ENCODE measurements at regions of chr6 and their contacts with region 1.

Region 1: DNA sequence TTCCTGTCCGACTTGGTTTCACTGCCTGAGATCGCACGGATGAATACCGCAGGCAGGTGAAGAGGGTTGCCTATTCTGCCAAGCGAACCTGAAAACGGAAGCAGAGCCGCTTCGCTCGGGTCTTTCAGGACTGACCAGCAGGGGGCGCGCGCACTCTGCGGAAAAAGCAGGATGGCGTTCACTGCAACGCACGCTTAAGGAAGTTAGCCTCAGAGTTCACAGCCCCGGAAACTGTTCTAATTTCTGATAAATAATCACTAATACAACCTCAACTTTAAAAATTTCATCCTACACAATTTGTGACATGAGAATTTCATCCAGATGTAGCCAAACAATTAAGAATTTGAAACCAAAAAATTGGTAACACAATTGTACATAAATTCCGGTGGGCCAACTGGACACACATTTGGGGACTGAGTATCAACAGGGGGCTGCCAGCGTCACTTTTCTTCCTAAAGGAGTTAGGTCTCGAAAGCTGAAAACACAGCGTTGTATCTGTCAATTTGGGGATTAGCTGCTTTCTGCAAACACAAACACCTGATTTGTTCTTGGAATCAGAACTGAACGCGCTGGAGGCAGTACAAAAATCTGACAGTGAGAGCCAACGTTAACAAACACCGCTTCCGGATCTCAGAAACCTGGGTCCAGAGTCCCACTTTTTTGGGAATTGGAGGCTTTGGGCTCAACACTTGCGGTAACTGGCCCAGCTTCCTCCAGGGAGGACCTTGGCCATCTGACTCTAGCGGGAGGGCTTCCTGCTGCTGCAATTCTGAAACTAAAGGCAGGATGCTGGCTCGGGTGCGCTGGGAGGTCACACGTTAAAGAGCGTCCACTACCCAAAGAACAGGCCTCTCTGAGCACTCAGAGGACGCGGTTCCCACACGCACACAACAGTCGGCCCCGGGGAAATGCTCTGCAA is 8.8 kb downstream of the PXDC1 start:
- DNase-seq: peak; percentile 97
- H3K4me3 ChIP-seq: peak overlapping the region in 4 of 8 donors; percentile 3 to 48 (median 8)
- H3K27ac ChIP-seq: peak overlapping the region; percentile 52 to 84 (median 75)
- H3K4me1 ChIP-seq: peaks cover 22 to 74% (median 60%) of the 10 kb centered on the region in 6 donors
- H3K27me3 ChIP-seq: no peaks in the 10 kb centered on the region
- CTCF ChIP-seq: peak; percentile 81 to 97 (median 96)
- POLR2A ChIP-seq: no peak

Region 2: DNA sequence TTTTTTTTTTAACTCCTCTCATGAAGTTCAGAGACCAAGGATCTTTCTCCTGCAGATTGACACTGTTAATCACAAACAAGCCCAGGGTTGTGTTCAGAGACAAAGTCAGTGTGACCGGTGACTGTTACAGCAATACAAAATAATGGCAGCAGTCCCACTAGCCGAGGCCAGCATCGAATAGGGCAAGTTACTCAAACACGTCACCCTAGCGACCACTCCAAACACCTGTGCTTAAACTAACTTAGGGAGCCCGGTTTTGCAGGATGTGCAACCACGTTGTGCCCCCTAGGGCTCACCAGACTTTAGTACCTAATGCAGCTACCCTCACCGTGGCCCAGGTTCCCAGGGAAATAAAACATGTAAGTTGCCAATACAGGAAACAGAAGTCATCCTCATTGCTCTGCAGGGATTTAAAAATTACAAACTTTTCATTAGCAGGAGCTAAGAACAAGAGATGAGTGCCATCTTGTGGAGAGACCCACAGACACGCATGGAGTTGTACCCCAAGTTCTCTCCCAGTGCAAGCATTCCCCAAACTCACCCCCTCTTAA is 144.5 kb after region 1 on chr6:
- intact Hi-C with region 1: loop called (anchors 10 kb)
- DNase-seq: no peak
- H3K4me3 ChIP-seq: no peak overlapping the region
- H3K27ac ChIP-seq: no peak overlapping the region
- H3K4me1 ChIP-seq: no peaks in the 10 kb centered on the region
- H3K27me3 ChIP-seq: no peaks in the 10 kb centered on the region
- CTCF ChIP-seq: peak in 8 of 11 experiments; percentile 29 to 64 (median 48)
- POLR2A ChIP-seq: no peak

Region 3: DNA sequence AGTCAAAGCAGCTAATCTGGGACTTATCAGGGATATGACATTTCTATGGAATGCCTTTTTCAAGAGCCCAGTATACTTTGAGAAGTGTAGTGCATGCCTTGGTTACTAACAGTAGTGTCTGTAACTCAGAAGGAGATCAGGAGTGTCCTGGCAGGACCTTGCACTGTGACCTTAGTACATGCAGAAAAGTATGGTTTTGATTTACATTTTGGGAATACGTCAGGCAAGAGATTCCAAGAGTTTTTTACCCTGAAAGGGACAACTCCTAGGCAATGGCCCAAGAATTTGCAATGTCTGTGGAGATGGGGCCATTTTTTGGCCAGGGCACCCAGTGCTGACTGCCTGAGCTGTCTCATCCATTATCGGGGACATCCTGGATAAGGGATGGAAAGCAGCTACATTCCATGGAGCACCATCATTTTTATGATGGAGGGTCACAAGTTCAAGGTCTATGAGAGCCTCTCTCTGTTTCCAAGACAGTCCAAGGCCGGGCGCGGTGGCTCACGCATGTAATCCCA is 186.7 kb after region 1 on chr6:
- intact Hi-C with region 1: loop called (anchors 5 kb)
- DNase-seq: no peak
- H3K4me3 ChIP-seq: no peak overlapping the region
- H3K27ac ChIP-seq: no peak overlapping the region
- H3K4me1 ChIP-seq: no peaks in the 10 kb centered on the region
- H3K27me3 ChIP-seq: peaks cover 0 to 3% (median 0%) of the 10 kb centered on the region in 7 donors
- CTCF ChIP-seq: no peak
- POLR2A ChIP-seq: no peak

Region 4: DNA sequence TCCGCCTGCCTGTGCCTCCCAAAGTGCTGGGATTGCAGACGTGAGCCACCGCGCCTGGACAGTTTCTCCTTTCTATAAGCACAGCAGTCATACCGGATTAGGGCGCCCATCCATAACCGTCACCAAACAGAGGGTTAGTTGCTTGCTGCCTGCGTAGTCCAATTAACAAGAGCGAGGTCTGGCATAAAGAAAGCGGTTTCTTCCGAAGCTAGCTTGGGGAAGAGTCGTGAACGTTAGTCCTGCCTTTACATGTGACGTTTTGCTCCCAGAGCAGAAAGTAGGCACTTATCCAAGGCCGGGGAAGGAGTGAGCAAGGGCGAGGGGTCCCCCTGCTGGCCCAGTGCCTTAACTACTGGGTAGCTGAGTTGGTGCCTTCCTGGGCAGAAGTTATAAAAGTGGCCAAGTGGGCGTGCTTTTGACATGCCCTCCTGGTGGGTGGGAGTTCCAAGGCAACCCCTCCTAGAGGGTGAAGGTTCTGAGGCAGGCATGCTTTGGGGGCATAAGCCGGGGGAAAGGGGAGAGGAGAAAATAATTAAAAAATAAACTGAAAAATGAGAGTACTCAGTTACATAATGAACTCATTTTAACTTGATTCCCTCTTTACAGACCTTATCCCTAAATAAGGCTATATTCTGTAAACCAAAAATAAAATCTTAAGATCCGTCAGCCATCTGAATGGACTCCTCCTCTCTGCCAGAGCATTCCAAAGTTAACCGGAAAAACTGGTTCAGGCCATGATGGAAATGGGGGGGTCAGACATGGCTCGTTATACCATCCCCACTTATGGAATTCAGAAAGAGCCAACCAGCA is 248.2 kb after region 1 on chr6:
- intact Hi-C with region 1: loop called (anchors 5 kb)
- DNase-seq: peak; percentile 90
- H3K4me3 ChIP-seq: peak overlapping the region in 6 of 8 donors; percentile 4 to 59 (median 22)
- H3K27ac ChIP-seq: peak overlapping the region in 6 of 8 donors; percentile 51 to 76 (median 66)
- H3K4me1 ChIP-seq: peaks cover 4 to 13% (median 10%) of the 10 kb centered on the region in 6 donors
- H3K27me3 ChIP-seq: no peaks in the 10 kb centered on the region
- CTCF ChIP-seq: peak; percentile 54 to 90 (median 83)
- POLR2A ChIP-seq: no peak

Region 5: GRCh38 chr6:4155848-4156466 is 413.3 kb after region 1 on chr6:
- intact Hi-C with region 1: loop called (anchors 10 kb)
- DNase-seq: no peak
- H3K4me3 ChIP-seq: no peak overlapping the region
- H3K27ac ChIP-seq: no peak overlapping the region
- H3K4me1 ChIP-seq: peaks cover 0 to 16% (median 2%) of the 10 kb centered on the region in 6 donors
- H3K27me3 ChIP-seq: peaks cover 0 to 4% (median 0%) of the 10 kb centered on the region in 7 donors
- CTCF ChIP-seq: peak; percentile 60 to 90 (median 82)
- POLR2A ChIP-seq: no peak

Measured in spleen (tissue), 13 donors.